B cell (primary cell): ENCODE measurements at regions of chr7 and their contacts with region 1.

Region 1: GRCh38 chr7:23357190-23358093 is 58.3 kb downstream of the MALSU1 start:
- DNase-seq: peak; percentile 70
- ATAC-seq: peak; percentile 79
- H3K4me3 ChIP-seq: no peak overlapping the region
- H3K4me3 Mint-ChIP-seq: no peak overlapping the region
- H3K27ac ChIP-seq: no peak overlapping the region
- H3K27ac Mint-ChIP-seq: no peak overlapping the region
- H3K4me1 ChIP-seq: peaks cover 2 to 9% of the 10 kb centered on the region in 2 donors
- H3K4me1 Mint-ChIP-seq: peaks cover 15% of the 10 kb centered on the region
- H3K27me3 ChIP-seq: peaks cover 0 to 3% (median 0%) of the 10 kb centered on the region in 4 experiments
- H3K27me3 Mint-ChIP-seq: no peaks in the 10 kb centered on the region
- CTCF ChIP-seq: peak; percentile 78

Region 2: GRCh38 chr7:23273141-23273599 is 84.3 kb before region 1 on chr7:
- CTCF ChIA-PET with region 1: interaction called, 12 read pairs
- POLR2A ChIA-PET with region 1: no interaction called
- intact Hi-C with region 1: loop called (anchors 5 kb)
- DNase-seq: peak; percentile 88
- ATAC-seq: peak; percentile 96
- H3K4me3 ChIP-seq: peak overlapping the region in 2 of 5 experiments; percentile 9 to 27
- H3K4me3 Mint-ChIP-seq: peak overlapping the region; percentile 72
- H3K27ac ChIP-seq: no peak overlapping the region
- H3K27ac Mint-ChIP-seq: peak overlapping the region; percentile 39
- H3K4me1 ChIP-seq: peaks cover 3 to 9% of the 10 kb centered on the region in 2 donors
- H3K4me1 Mint-ChIP-seq: peaks cover 4% of the 10 kb centered on the region
- H3K27me3 ChIP-seq: peaks cover 0 to 6% (median 0%) of the 10 kb centered on the region in 4 experiments
- H3K27me3 Mint-ChIP-seq: peaks cover 9% of the 10 kb centered on the region
- CTCF ChIP-seq: peak; percentile 90

Region 3: GRCh38 chr7:23403970-23404369 is 46.5 kb after region 1 on chr7:
- CTCF ChIA-PET with region 1: interaction called, 12 read pairs
- POLR2A ChIA-PET with region 1: no interaction called
- intact Hi-C with region 1: no loop called
- DNase-seq: no peak
- ATAC-seq: no peak
- H3K4me3 ChIP-seq: no peak overlapping the region
- H3K4me3 Mint-ChIP-seq: no peak overlapping the region
- H3K27ac ChIP-seq: no peak overlapping the region
- H3K27ac Mint-ChIP-seq: no peak overlapping the region
- H3K4me1 ChIP-seq: no peaks in the 10 kb centered on the region
- H3K4me1 Mint-ChIP-seq: peaks cover under 1% of the 10 kb centered on the region
- H3K27me3 ChIP-seq: peaks cover 0 to 2% (median 0%) of the 10 kb centered on the region in 4 experiments
- H3K27me3 Mint-ChIP-seq: no peaks in the 10 kb centered on the region
- CTCF ChIP-seq: no peak

Region 4: DNA sequence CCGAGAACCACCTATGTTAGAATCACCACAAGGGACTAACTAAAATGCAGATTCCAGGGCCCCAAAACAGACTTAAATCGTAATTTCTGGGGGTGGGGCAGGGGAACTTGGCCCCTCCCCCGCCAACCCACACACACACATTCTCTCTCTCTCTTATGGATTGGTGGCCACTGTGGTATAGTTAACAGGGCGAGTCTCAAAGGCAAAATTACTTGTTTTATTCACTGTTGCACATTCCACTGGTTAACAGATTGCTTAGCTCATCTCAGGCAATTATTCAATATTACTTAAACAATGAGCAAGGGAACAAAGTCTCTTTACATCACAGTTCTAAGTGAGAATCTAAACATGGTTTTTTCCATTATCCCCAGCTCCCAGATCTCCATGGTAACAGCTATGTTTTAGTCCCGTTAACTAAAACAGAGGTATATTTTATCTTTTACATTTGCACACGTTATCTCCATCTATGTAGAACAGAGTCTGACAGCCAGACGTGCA is 74.3 kb after region 1 on chr7:
- CTCF ChIA-PET with region 1: interaction called, 14 read pairs
- POLR2A ChIA-PET with region 1: no interaction called
- intact Hi-C with region 1: no loop called
- DNase-seq: no peak
- ATAC-seq: no peak
- H3K4me3 ChIP-seq: no peak overlapping the region
- H3K4me3 Mint-ChIP-seq: no peak overlapping the region
- H3K27ac ChIP-seq: no peak overlapping the region
- H3K27ac Mint-ChIP-seq: no peak overlapping the region
- H3K4me1 ChIP-seq: no peaks in the 10 kb centered on the region
- H3K4me1 Mint-ChIP-seq: no peaks in the 10 kb centered on the region
- H3K27me3 ChIP-seq: no peaks in the 10 kb centered on the region
- H3K27me3 Mint-ChIP-seq: peaks cover 12% of the 10 kb centered on the region
- CTCF ChIP-seq: no peak

Region 5: GRCh38 chr7:23514755-23515154 is 157.3 kb after region 1 on chr7:
- CTCF ChIA-PET with region 1: interaction called, 12 read pairs
- POLR2A ChIA-PET with region 1: no interaction called
- intact Hi-C with region 1: no loop called
- DNase-seq: no peak
- ATAC-seq: no peak
- H3K4me3 ChIP-seq: no peak overlapping the region
- H3K4me3 Mint-ChIP-seq: no peak overlapping the region
- H3K27ac ChIP-seq: no peak overlapping the region
- H3K27ac Mint-ChIP-seq: no peak overlapping the region
- H3K4me1 ChIP-seq: no peaks in the 10 kb centered on the region
- H3K4me1 Mint-ChIP-seq: no peaks in the 10 kb centered on the region
- H3K27me3 ChIP-seq: no peaks in the 10 kb centered on the region
- H3K27me3 Mint-ChIP-seq: no peaks in the 10 kb centered on the region
- CTCF ChIP-seq: no peak

Region 6: DNA sequence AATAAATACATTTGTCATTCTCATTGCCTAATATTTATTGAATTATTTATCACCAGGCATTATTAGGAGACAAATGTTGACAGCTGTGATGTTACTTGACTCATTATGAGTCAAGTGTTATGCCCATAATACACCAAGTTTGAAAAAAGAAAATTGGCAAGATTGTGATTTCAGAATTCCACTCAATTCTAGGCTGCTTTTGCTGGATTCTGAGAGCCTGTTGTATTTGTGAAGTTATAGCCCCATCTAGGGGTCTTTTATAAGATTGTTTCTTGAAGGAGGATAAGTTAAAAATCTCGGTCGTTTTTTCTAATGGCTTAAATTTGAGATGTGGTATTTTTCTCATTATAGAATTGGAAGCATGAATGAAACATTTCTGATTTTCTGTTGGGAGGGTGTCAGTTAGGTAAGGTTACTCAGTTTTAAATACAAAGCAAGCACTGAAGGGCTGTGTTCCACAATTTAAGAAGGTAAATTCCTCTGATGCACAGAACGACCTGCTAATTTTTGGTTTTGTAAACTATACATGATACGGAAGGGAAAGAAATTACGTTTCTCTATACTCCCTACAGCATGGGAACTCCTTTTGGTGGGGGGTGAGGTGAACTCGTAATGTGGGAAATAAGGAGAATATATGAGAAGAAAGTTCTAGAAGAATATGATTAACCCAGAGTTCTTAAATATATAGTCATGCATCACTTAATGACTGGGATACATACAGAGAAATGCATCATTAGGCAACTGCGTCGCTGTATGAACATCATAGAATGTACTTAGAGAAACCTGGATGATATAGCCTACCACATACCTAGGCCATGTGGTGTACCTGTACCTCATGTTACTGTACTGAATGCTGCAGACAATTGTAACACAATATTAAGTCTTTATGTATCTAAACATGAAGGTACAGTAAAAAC is 355.2 kb after region 1 on chr7:
- CTCF ChIA-PET with region 1: interaction called, 10 read pairs
- POLR2A ChIA-PET with region 1: no interaction called
- intact Hi-C with region 1: loop called (anchors 1 kb)
- DNase-seq: peak; percentile 66
- ATAC-seq: peak; percentile 39
- H3K4me3 ChIP-seq: no peak overlapping the region
- H3K4me3 Mint-ChIP-seq: no peak overlapping the region
- H3K27ac ChIP-seq: no peak overlapping the region
- H3K27ac Mint-ChIP-seq: no peak overlapping the region
- H3K4me1 ChIP-seq: no peaks in the 10 kb centered on the region
- H3K4me1 Mint-ChIP-seq: no peaks in the 10 kb centered on the region
- H3K27me3 ChIP-seq: no peaks in the 10 kb centered on the region
- H3K27me3 Mint-ChIP-seq: no peaks in the 10 kb centered on the region
- CTCF ChIP-seq: peak; percentile 85